ENCODE measurements at regions of chr17 and their contacts with region 1.

Region 1: DNA sequence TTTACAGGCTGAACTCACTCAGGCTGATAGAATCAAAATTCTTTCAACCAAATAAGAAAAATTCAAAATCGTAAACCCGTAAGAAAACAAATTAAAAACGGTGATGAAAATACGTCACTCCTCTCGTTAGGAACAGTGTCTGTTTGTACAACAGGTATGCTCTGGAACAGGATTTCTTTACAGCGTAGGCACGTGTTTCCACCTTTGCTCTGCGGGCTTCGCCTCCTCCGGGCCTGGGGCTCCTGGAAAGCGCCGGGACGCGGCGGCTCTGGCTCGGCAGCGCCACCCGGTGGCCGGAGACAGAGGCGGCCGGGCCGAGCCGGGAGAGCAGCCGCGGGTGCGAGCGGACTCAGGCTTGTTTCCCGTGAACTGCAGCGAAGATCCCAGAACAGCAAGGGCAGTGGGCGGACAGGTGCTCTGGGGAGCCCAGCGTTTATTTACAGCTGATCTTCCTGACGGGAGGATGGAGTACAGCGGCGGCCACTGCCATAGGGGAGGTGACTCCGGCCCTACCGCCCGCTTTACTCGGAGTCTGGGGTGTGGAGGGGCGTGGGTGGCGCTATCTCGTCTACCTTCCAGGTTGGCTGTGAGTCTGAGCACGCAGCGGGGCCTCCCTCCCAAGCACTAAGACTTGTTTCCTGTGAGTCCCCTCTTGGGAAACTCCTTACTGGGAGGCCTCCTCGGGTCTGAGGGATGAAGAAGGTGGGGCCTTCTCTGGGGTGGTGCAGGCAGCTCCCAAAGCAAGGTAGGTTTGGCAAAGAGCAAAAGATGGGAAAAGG is 40.5 kb upstream of the ATP2A3 start:
- DNase-seq: peak; percentile 51
- ATAC-seq: peak; percentile 80
- H3K4me3 ChIP-seq: no peak overlapping the region
- H3K27ac ChIP-seq: no peak overlapping the region
- H3K4me1 ChIP-seq: no peaks in the 10 kb centered on the region
- H3K27me3 ChIP-seq: no peaks in the 10 kb centered on the region
- CTCF ChIP-seq: peak; percentile 88

Region 2: DNA sequence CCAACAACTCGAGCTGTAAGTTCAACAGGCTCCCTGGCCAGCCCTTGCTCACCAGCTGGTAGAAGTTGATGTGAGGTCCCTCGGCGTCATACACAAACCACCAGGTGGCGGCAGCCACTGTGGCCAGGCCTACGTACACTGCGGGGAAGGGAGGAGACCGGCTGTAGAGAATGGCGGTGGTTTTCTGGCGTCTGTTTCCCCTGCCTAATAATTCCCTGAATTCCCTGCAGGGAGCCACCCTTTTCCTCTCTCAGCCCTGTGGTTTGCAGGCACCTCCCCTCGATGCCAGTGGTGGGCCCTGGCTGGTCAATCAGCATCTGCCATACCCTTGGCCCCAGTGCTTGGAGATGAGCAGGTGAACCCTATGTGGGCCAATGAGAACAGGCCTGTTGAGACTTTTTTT is 69.6 kb before region 1 on chr17:
- CTCF ChIA-PET with region 1: no interaction called
- POLR2A ChIA-PET with region 1: no interaction called
- intact Hi-C with region 1: loop called (anchors 2 kb)
- DNase-seq: peak; percentile 77
- ATAC-seq: peak; percentile 99
- H3K4me3 ChIP-seq: no peak overlapping the region
- H3K27ac ChIP-seq: no peak overlapping the region
- H3K4me1 ChIP-seq: no peaks in the 10 kb centered on the region
- H3K27me3 ChIP-seq: no peaks in the 10 kb centered on the region
- CTCF ChIP-seq: peak; percentile 74